H1 (cell line): ENCODE measurements at regions of chr1 and their contacts with region 1.

Region 1: GRCh38 chr1:67535474-67535873 is 105.3 kb upstream of the SERBP1 start:
- DNase-seq: peak; percentile 41 to 86
- H3K4me3 ChIP-seq: no peak overlapping the region
- H3K27ac ChIP-seq: no peak overlapping the region
- H3K4me1 ChIP-seq: no peaks in the 10 kb centered on the region
- H3K27me3 ChIP-seq: no peaks in the 10 kb centered on the region
- CTCF ChIP-seq: peak; percentile 90 to 98 (median 97)
- EP300 ChIP-seq: no peak
- POLR2A ChIP-seq: no peak
- RAD21 ChIP-seq: peak; percentile 90 to 94

Region 2: DNA sequence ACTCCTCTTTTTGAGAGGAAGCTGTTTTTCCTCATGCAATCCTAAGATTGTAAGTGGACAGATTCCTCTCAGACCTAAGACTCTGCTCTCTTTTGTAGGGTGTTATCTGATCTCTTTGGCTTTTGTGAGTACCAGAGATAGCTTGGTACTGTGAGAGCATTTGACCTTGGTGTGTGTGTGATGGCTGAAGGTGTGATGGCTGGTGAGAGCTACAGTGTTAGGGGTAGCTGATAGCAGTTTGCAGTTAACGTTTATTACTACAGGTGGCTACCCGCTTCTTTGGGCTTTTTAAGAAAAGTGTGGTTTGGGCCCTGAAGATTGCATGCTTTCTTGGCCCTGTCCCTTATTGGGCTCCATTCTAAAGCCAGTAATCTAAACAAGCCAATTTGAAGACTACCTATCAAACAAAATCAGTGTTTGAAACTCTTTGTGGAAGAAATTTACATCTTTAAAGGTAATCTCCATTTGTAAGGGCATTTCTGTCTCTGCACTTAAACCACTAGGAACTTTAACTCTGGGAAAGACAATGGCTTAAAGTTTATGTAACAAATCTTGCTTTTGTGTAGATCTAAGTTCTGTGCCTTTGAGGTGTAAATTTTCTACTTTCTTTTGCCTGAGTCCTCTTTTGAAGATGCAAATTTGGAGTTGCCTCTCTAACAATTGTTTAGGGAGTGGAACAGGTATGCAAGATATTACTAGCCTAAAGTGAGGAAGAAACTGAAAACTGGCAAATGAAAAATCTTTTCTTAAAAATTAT is 20.0 kb before region 1 on chr1:
- CTCF ChIA-PET with region 1: interaction called, 20 read pairs
- POLR2A ChIA-PET with region 1: no interaction called
- DNase-seq: peak in 1 of 2 experiments; percentile 33
- H3K4me3 ChIP-seq: no peak overlapping the region
- H3K27ac ChIP-seq: no peak overlapping the region
- H3K4me1 ChIP-seq: no peaks in the 10 kb centered on the region; a peak in 1 of 7 replicates
- H3K27me3 ChIP-seq: peaks cover 42 to 67% (median 63%) of the 10 kb centered on the region in 4 experiments
- CTCF ChIP-seq: no peak
- EP300 ChIP-seq: no peak
- POLR2A ChIP-seq: no peak
- RAD21 ChIP-seq: no peak

Region 3: DNA sequence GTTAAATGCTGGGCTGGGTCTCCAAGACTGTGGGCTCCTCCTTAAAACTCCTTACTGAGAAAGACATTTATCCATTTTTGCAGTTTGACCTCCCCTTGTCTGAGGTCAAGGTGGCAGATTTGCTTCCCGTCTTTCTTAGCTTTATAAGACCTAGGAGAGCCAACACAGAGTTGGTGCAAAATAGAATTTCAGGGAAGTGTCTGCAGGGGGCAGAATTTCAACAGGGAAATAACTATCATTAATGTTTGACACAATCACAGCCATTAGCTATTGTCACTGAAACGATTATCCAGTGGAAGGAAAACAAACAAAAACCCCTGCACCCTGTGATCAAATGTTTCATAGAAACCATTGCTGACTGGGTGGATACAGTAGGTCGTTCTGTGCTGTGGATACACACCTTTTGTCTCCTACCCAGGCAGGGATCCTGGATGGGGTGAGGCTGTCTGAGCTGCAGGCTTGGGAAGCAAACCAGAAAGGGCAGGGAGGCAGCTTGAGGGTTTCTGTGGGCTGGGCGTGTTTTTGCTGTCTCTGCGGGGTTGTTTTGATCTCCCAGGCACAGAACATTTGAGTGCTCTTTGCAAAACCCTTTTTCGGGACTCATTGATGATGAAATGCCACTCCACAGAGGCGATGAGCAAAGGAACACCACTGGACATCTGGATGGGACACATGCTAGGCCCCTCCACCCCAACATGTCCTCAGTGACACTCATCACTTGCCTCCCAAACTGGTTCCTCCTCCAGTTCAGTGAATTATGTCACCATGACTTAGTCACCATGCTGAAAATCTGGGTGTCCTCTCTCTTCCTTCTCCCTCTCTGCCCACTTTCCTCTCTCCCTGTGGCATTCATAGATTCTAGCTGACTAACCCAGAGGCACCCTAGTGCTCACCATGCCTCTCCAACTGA is 11.1 kb before region 1 on chr1:
- CTCF ChIA-PET with region 1: interaction called, 83 read pairs
- POLR2A ChIA-PET with region 1: no interaction called
- DNase-seq: no peak
- H3K4me3 ChIP-seq: no peak overlapping the region
- H3K27ac ChIP-seq: no peak overlapping the region
- H3K4me1 ChIP-seq: no peaks in the 10 kb centered on the region
- H3K27me3 ChIP-seq: peaks cover 14 to 36% (median 22%) of the 10 kb centered on the region in 4 experiments
- CTCF ChIP-seq: peak in 2 of 3 experiments; percentile 5 to 48; a peak in 2 of 4 replicates
- EP300 ChIP-seq: no peak
- POLR2A ChIP-seq: no peak
- RAD21 ChIP-seq: peak in 1 of 2 experiments; percentile 32; a peak in 1 of 4 replicates

Region 4: DNA sequence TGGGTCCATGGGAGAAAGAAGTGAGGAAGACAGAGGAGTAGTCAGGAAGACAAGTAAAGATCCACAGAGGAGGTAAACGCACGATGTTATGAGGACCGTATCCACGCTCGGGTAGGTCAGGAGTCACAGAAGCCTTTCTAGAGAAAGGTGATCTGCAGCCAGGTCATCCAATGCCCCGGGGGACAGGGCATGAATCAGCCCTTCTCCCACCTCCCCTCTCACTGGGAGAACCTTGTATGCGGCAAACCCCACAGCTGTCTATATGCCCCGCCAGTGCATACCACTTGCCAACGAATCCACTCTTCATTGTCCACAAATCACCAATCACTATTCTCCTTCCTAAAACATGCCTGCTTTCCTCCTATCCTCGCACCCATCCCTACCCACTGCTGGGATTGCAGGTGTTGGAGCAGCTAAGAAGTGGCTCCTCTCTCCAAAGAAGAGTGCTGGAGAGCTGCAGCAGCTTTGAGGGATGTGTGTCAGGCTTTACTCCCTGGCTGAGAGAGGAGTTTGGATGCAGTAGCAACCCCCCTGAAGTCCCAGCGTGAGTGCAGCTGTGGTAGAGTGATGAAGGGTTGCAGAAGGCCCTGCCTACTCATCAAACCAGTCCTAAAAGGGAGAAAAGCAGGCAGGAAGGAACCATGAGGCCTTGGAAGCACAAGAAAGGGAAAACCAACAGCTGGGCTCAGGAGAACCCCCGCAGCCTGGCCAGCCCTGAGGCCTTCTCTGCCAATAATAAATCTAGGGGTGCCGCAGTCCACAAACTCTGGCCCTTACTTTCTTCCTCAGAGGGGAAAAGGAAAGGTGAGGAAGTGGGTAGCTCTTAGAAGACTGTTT is 47.4 kb after region 1 on chr1:
- CTCF ChIA-PET with region 1: interaction called, 12 read pairs
- POLR2A ChIA-PET with region 1: no interaction called
- DNase-seq: no peak
- H3K4me3 ChIP-seq: no peak overlapping the region
- H3K27ac ChIP-seq: no peak overlapping the region
- H3K4me1 ChIP-seq: 0 out of 7 replicates have a peak, but pooled peaks cover 0 to 4% (median 0%) of the 10 kb centered on the region in 4 experiments
- H3K27me3 ChIP-seq: peaks cover 0 to 4% (median 0%) of the 10 kb centered on the region in 4 experiments; a peak in 2 of 7 replicates
- CTCF ChIP-seq: no peak
- EP300 ChIP-seq: no peak
- POLR2A ChIP-seq: no peak
- RAD21 ChIP-seq: no peak

Region 5: DNA sequence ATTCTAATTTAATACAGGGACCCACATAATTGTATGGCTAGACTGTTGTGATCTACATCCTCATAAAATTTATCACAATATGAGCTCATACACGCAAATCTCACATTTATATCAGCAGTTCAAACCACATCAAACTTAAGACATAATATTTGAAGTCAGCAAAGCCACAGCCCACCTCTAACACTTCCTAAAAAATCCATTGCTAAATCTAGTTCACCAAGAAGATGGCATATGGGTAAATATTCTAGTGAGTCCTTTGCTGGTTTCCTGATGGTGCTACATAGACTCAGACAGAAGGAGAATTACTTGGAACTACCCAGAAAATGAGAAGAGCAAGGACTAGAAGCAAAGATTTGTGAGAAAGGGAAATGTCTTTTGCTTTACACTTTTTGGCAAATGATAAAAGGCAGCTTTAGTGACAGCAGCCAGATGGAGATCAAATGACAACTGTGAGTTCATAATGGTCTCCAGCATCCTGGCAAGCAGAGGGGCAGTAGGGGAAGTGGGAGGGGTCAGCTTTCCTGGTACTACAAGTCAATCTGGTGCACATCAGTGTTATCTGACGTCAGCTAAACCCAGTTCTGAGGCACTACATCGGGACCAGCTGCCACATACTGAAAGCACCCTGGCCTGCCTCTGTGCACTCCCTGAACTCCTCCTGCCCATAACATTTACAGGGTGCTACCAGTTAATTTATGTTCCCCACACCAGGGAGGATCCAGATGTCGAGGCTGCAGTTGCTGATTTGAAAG is 139.0 kb after region 1 on chr1:
- CTCF ChIA-PET with region 1: interaction called, 24 read pairs
- POLR2A ChIA-PET with region 1: no interaction called
- DNase-seq: no peak
- H3K4me3 ChIP-seq: no peak overlapping the region
- H3K27ac ChIP-seq: no peak overlapping the region
- H3K4me1 ChIP-seq: no peaks in the 10 kb centered on the region
- H3K27me3 ChIP-seq: no peaks in the 10 kb centered on the region
- CTCF ChIP-seq: no peak
- EP300 ChIP-seq: no peak
- POLR2A ChIP-seq: no peak
- RAD21 ChIP-seq: no peak

Region 6: DNA sequence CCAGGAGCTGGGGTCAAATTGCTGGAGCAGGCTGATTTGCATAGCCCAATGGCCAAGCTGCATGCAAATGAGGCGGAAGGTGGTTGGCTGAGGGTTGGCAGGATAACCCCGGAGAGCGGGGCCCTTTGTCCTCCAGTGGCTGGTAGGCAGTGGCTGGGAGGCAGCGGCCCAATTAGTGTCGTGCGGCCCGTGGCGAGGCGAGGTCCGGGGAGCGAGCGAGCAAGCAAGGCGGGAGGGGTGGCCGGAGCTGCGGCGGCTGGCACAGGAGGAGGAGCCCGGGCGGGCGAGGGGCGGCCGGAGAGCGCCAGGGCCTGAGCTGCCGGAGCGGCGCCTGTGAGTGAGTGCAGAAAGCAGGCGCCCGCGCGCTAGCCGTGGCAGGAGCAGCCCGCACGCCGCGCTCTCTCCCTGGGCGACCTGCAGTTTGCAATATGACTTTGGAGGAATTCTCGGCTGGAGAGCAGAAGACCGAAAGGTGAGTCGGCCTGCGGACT is 149.6 kb after region 1 on chr1 and contains the start of gene GADD45A:
- CTCF ChIA-PET with region 1: interaction called, 13 read pairs
- POLR2A ChIA-PET with region 1: interaction called, 8 read pairs
- DNase-seq: peak; percentile 96 to 97
- H3K4me3 ChIP-seq: peak within 1 kb of the TSS; percentile 84 to 98 (median 90)
- H3K27ac ChIP-seq: no peak within 1 kb of the TSS; the same call in 1 of the 2 replicates
- H3K4me1 ChIP-seq: peaks cover 0 to 9% (median 5%) of the 10 kb centered on the region in 4 experiments; a peak in 5 of 7 replicates
- H3K27me3 ChIP-seq: no peaks in the 10 kb centered on the region
- CTCF ChIP-seq: no peak
- EP300 ChIP-seq: peak in 1 of 2 experiments; percentile 32; a peak in 1 of 3 replicates
- POLR2A ChIP-seq: peak; percentile 96 to 98
- RAD21 ChIP-seq: peak; percentile 10; a peak in 1 of 4 replicates
- total RNA-seq, gene GADD45A: 15.5 and 15.6 TPM in 2 replicates

Region 7: GRCh38 chr1:67753776-67754525 is 218.5 kb after region 1 on chr1:
- CTCF ChIA-PET with region 1: interaction called, 18 read pairs
- POLR2A ChIA-PET with region 1: interaction called, 3 read pairs
- DNase-seq: no peak
- H3K4me3 ChIP-seq: no peak overlapping the region
- H3K27ac ChIP-seq: no peak overlapping the region
- H3K4me1 ChIP-seq: peaks cover 8 to 22% (median 21%) of the 10 kb centered on the region in 4 experiments; a peak in 6 of 7 replicates
- H3K27me3 ChIP-seq: no peaks in the 10 kb centered on the region
- CTCF ChIP-seq: no peak
- EP300 ChIP-seq: no peak
- POLR2A ChIP-seq: no peak
- RAD21 ChIP-seq: no peak